CD8-positive, alpha-beta T cell (primary cell): ENCODE measurements at regions of chr12 and their contacts with region 1.

Region 1: DNA sequence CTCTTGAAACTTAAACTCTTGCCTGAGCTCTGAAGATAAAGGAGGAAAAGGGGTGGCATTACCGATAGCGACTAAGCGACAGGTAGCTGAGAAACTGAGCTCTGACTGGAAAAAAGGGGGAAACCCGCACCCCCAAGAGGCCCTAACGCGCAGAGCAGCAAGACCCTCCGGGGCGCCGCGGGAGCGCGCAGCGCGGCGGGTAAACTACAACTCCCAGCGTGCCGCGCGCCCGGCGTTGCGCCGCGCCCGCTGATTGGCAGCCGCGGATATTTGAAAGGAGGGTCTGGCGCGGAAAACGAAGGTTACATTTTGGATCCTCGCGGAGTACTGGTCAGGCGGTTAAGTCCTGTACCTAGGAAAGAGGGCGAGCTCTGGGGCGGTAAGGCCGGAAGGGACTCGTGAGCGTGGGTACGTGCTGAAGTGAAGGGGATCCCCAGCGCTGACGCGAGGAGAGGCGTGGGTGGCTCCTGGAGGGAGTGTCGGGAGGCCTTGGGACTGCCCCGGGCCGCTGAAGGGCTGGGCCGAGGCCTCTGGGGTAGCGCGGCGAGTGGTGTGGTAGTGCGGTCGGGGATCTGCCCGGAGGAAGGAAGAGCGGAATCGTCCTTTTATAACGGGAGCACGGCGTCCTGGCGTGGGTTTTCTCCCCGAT is at the start of gene ESPL1:
- DNase-seq: peak; percentile 67 to 94 (median 84)
- ATAC-seq: peak; percentile 95
- H3K4me3 ChIP-seq: peak within 1 kb of the TSS; percentile 66 to 69
- H3K4me3 Mint-ChIP-seq: peak within 1 kb of the TSS; percentile 97
- H3K27ac ChIP-seq: peak within 1 kb of the TSS; percentile 25 to 68
- H3K27ac Mint-ChIP-seq: peak within 1 kb of the TSS; percentile 94
- H3K4me1 ChIP-seq: peaks cover 5% of the 10 kb centered on the region
- H3K4me1 Mint-ChIP-seq: peaks cover 17% of the 10 kb centered on the region
- H3K27me3 ChIP-seq: no peaks in the 10 kb centered on the region
- H3K27me3 Mint-ChIP-seq: no peaks in the 10 kb centered on the region
- CTCF ChIP-seq: peak; percentile 45
- total RNA-seq, gene ESPL1: 0.56 to 1.7 TPM

Region 2: GRCh38 chr12:51284476-51284875 is 1983.6 kb before region 1 on chr12:
- CTCF ChIA-PET with region 1: no interaction called
- POLR2A ChIA-PET with region 1: no interaction called
- intact Hi-C with region 1: no loop called
- DNase-seq: no peak
- ATAC-seq: no peak
- H3K4me3 ChIP-seq: no peak overlapping the region
- H3K4me3 Mint-ChIP-seq: no peak overlapping the region
- H3K27ac ChIP-seq: peak overlapping the region in 1 of 2 experiments; percentile 10
- H3K27ac Mint-ChIP-seq: peak overlapping the region; percentile 45
- H3K4me1 ChIP-seq: no peaks in the 10 kb centered on the region
- H3K4me1 Mint-ChIP-seq: peaks cover 5% of the 10 kb centered on the region
- H3K27me3 ChIP-seq: no peaks in the 10 kb centered on the region
- H3K27me3 Mint-ChIP-seq: no peaks in the 10 kb centered on the region
- CTCF ChIP-seq: no peak

Region 3: GRCh38 chr12:51307655-51308593 is 1960.2 kb before region 1 on chr12:
- CTCF ChIA-PET with region 1: no interaction called
- POLR2A ChIA-PET with region 1: no interaction called
- intact Hi-C with region 1: no loop called
- DNase-seq: peak in 2 of 9 experiments; percentile 21 to 49
- ATAC-seq: peak; percentile 73
- H3K4me3 ChIP-seq: no peak overlapping the region
- H3K4me3 Mint-ChIP-seq: no peak overlapping the region
- H3K27ac ChIP-seq: peak overlapping the region; percentile 34 to 56
- H3K27ac Mint-ChIP-seq: peak overlapping the region; percentile 80
- H3K4me1 ChIP-seq: peaks cover 54% of the 10 kb centered on the region
- H3K4me1 Mint-ChIP-seq: peaks cover 74% of the 10 kb centered on the region
- H3K27me3 ChIP-seq: no peaks in the 10 kb centered on the region
- H3K27me3 Mint-ChIP-seq: no peaks in the 10 kb centered on the region
- CTCF ChIP-seq: no peak

Region 4: GRCh38 chr12:52913076-52913821 is 354.9 kb before region 1 on chr12:
- CTCF ChIA-PET with region 1: no interaction called
- POLR2A ChIA-PET with region 1: no interaction called
- intact Hi-C with region 1: no loop called
- DNase-seq: no peak
- ATAC-seq: no peak
- H3K4me3 ChIP-seq: no peak overlapping the region
- H3K4me3 Mint-ChIP-seq: no peak overlapping the region
- H3K27ac ChIP-seq: no peak overlapping the region
- H3K27ac Mint-ChIP-seq: no peak overlapping the region
- H3K4me1 ChIP-seq: no peaks in the 10 kb centered on the region
- H3K4me1 Mint-ChIP-seq: peaks cover 2% of the 10 kb centered on the region
- H3K27me3 ChIP-seq: no peaks in the 10 kb centered on the region
- H3K27me3 Mint-ChIP-seq: peaks cover 2% of the 10 kb centered on the region
- CTCF ChIP-seq: no peak

Region 5: DNA sequence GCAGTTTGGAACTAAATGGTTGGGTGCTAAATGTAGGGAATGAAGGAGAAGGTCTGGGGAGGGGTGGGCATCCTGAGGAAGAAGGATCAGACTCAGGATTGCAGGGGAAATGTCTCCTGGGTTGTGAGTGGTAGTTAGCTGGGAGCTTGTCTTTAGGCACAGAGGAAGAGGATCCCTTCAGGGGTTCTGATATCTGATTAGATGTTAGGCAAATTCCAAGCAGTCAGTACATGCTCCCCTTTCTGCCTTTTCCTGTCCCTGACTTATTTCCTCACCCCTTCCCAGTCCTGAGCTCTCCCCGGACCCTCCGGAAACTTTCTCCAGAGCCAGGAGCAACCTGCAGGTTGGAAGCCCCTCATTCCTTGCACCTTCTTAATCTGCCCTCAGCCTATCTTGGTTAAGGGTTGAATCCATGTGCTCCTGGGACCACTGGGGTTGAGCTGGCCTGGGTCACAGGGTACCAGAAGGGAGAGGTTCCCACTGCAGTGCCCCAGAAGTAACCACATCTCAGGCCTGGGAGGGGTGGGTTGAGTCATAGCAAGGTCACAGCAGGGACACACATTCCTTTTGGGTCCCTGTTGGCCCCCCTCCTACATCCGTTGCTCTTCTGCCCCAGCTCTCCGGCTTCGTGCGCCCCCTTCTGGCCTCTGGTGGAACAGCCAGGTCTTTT is 169.0 kb before region 1 on chr12:
- CTCF ChIA-PET with region 1: interaction called, 15 read pairs
- POLR2A ChIA-PET with region 1: no interaction called
- intact Hi-C with region 1: no loop called
- DNase-seq: peak; percentile 70 to 94 (median 89)
- ATAC-seq: peak; percentile 61
- H3K4me3 ChIP-seq: no peak overlapping the region
- H3K4me3 Mint-ChIP-seq: peak overlapping the region; percentile 79
- H3K27ac ChIP-seq: peak overlapping the region in 1 of 2 experiments; percentile 23
- H3K27ac Mint-ChIP-seq: peak overlapping the region; percentile 84
- H3K4me1 ChIP-seq: peaks cover 52% of the 10 kb centered on the region
- H3K4me1 Mint-ChIP-seq: peaks cover 48% of the 10 kb centered on the region
- H3K27me3 ChIP-seq: no peaks in the 10 kb centered on the region
- H3K27me3 Mint-ChIP-seq: no peaks in the 10 kb centered on the region
- CTCF ChIP-seq: peak; percentile 98

Region 6: DNA sequence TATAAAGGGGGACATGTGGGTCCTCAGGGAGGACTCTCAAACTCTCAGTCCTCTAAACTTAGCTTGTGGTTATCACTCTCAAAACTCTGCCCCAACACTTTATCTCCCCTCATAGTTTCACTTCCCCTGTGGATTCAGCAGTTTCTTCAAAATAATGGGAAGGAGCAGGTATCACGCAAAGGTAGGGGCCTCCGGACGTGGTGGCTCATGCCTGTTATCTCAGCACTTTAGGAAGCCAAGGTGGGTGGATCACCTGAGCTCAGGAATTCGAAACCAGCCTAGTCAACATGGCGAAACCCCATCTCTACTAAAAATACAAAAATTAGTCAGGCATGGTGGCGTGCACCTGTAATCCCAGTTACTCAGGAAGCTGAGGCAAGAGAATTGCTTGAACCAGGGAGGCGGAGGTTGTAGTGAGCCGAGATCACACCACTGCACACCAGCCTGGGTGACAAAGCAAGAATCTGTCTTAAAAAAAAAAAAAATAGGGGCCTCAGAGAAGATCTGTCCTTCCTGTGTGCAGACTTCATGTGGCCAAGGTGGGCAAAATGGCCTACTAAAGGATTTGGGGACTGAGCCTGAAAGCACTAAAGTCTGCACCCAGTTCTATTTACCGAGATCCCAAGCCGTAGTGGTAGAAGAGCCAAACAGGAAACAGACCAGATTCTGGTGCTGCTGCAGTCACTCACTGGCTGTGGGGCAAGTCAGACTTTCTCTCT is 67.5 kb before region 1 on chr12:
- CTCF ChIA-PET with region 1: interaction called, 13 read pairs
- POLR2A ChIA-PET with region 1: interaction called, 3 read pairs
- intact Hi-C with region 1: no loop called
- DNase-seq: peak in 3 of 9 experiments; percentile 31 to 63 (median 49)
- ATAC-seq: peak; percentile 41
- H3K4me3 ChIP-seq: peak overlapping the region in 1 of 2 experiments; percentile 7
- H3K4me3 Mint-ChIP-seq: peak overlapping the region; percentile 73
- H3K27ac ChIP-seq: peak overlapping the region; percentile 14 to 30
- H3K27ac Mint-ChIP-seq: peak overlapping the region; percentile 93
- H3K4me1 ChIP-seq: peaks cover 89% of the 10 kb centered on the region
- H3K4me1 Mint-ChIP-seq: peaks cover 72% of the 10 kb centered on the region
- H3K27me3 ChIP-seq: no peaks in the 10 kb centered on the region
- H3K27me3 Mint-ChIP-seq: no peaks in the 10 kb centered on the region
- CTCF ChIP-seq: no peak

Region 7: GRCh38 chr12:53213348-53213747 is 54.8 kb before region 1 on chr12:
- CTCF ChIA-PET with region 1: interaction called, 172 read pairs
- POLR2A ChIA-PET with region 1: interaction called, 32 read pairs
- intact Hi-C with region 1: loop called (anchors 1 kb)
- DNase-seq: peak; percentile 59 to 92 (median 85)
- ATAC-seq: peak; percentile 74
- H3K4me3 ChIP-seq: no peak overlapping the region
- H3K4me3 Mint-ChIP-seq: no peak overlapping the region
- H3K27ac ChIP-seq: no peak overlapping the region
- H3K27ac Mint-ChIP-seq: peak overlapping the region; percentile 80
- H3K4me1 ChIP-seq: peaks cover 55% of the 10 kb centered on the region
- H3K4me1 Mint-ChIP-seq: peaks cover 62% of the 10 kb centered on the region
- H3K27me3 ChIP-seq: no peaks in the 10 kb centered on the region
- H3K27me3 Mint-ChIP-seq: no peaks in the 10 kb centered on the region
- CTCF ChIP-seq: peak; percentile 85

Region 8: DNA sequence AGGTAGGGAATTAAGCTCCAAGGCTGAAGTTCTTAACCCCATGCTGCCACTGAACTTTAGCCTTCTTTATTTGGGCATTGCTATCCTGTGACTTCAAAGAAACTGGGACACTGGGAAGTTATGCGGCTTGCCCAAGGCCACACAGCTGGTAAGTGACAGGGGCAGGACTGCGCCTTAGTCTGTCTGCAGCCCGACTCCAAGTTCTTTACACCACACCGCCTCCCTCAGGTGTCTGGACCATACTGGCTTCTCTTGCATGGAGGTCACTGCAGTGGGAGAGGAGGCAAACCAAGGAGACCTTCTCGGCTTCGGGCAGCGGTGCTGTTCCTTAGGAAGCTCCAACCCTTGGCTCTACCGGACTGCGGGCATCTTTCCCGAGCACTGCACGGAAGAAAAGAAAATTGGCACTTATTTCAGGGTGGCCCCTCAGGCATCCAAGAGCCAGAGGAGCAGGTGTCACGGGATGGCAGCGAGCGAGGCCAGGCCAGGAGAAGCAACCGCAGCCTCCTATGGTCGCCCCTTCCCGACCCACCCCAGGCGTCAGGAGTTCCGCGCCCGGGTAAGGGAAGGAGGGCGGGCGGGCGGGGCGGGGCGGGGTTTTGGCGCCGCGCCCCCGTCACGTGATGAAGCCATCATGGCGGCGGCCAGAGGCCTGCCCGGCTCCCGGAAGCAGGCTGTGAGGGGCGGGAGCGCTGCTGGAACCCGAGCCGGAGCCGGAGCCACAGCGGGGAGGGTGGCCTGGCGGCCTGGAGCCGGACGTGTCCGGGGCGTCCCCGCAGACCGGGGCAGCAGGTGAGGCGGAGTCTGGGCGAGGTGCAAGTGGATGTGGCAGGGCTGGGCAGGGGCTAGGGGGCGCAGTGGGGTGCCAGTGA is 16.4 kb before region 1 on chr12:
- CTCF ChIA-PET with region 1: interaction called, 38 read pairs
- POLR2A ChIA-PET with region 1: interaction called, 3 read pairs
- intact Hi-C with region 1: loop called (anchors 1 kb)
- DNase-seq: peak; percentile 28 to 85 (median 71)
- ATAC-seq: peak; percentile 87
- H3K4me3 ChIP-seq: peak overlapping the region; percentile 71 to 86
- H3K4me3 Mint-ChIP-seq: peak overlapping the region; percentile 98
- H3K27ac ChIP-seq: peak overlapping the region; percentile 70 to 80
- H3K27ac Mint-ChIP-seq: peak overlapping the region; percentile 96
- H3K4me1 ChIP-seq: peaks cover 46% of the 10 kb centered on the region
- H3K4me1 Mint-ChIP-seq: peaks cover 50% of the 10 kb centered on the region
- H3K27me3 ChIP-seq: no peaks in the 10 kb centered on the region
- H3K27me3 Mint-ChIP-seq: no peaks in the 10 kb centered on the region
- CTCF ChIP-seq: peak; percentile 40

Region 9: GRCh38 chr12:53287741-53288216 is 19.7 kb after region 1 on chr12:
- CTCF ChIA-PET with region 1: interaction called, 32 read pairs
- POLR2A ChIA-PET with region 1: interaction called, 7 read pairs
- intact Hi-C with region 1: loop called in 1 of 2 experiments (anchors 1 kb)
- DNase-seq: peak; percentile 42 to 86 (median 75)
- ATAC-seq: peak; percentile 96
- H3K4me3 ChIP-seq: no peak overlapping the region
- H3K4me3 Mint-ChIP-seq: no peak overlapping the region
- H3K27ac ChIP-seq: no peak overlapping the region
- H3K27ac Mint-ChIP-seq: no peak overlapping the region
- H3K4me1 ChIP-seq: no peaks in the 10 kb centered on the region
- H3K4me1 Mint-ChIP-seq: peaks cover 4% of the 10 kb centered on the region
- H3K27me3 ChIP-seq: no peaks in the 10 kb centered on the region
- H3K27me3 Mint-ChIP-seq: no peaks in the 10 kb centered on the region
- CTCF ChIP-seq: peak; percentile 62

Region 10: GRCh38 chr12:53313996-53314395 is 45.9 kb after region 1 on chr12:
- CTCF ChIA-PET with region 1: no interaction called
- POLR2A ChIA-PET with region 1: no interaction called
- intact Hi-C with region 1: no loop called
- DNase-seq: no peak
- ATAC-seq: no peak
- H3K4me3 ChIP-seq: no peak overlapping the region
- H3K4me3 Mint-ChIP-seq: no peak overlapping the region
- H3K27ac ChIP-seq: no peak overlapping the region
- H3K27ac Mint-ChIP-seq: no peak overlapping the region
- H3K4me1 ChIP-seq: no peaks in the 10 kb centered on the region
- H3K4me1 Mint-ChIP-seq: peaks cover 6% of the 10 kb centered on the region
- H3K27me3 ChIP-seq: no peaks in the 10 kb centered on the region
- H3K27me3 Mint-ChIP-seq: no peaks in the 10 kb centered on the region
- CTCF ChIP-seq: no peak